AG04450 (cell line): ENCODE measurements at regions of chr6 and their contacts with region 1.

Region 1: DNA sequence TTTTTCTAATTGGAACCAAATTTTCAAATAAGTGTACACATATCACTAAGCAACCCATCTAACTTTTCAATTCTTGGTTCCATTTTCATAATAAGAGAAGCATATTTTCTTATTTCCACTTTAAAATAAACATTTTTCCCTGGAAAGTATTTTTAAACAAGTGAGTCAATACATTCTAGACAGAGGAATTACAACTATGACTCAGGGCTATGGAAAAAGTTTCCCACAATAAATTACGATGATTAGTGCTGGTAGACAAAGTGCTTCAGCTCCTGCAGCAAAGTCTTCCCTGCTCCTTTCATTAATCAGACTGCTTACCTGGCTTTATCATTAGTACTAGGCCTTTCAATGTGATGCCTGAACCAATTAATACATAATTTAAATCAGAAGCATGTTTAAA is 322.5 kb downstream of the HACE1 start:
- DNase-seq: peak; percentile 32
- H3K4me3 ChIP-seq: no peak overlapping the region
- H3K27ac ChIP-seq: no peak overlapping the region
- H3K27me3 ChIP-seq: no peaks in the 10 kb centered on the region
- CTCF ChIP-seq: no peak

Region 2: DNA sequence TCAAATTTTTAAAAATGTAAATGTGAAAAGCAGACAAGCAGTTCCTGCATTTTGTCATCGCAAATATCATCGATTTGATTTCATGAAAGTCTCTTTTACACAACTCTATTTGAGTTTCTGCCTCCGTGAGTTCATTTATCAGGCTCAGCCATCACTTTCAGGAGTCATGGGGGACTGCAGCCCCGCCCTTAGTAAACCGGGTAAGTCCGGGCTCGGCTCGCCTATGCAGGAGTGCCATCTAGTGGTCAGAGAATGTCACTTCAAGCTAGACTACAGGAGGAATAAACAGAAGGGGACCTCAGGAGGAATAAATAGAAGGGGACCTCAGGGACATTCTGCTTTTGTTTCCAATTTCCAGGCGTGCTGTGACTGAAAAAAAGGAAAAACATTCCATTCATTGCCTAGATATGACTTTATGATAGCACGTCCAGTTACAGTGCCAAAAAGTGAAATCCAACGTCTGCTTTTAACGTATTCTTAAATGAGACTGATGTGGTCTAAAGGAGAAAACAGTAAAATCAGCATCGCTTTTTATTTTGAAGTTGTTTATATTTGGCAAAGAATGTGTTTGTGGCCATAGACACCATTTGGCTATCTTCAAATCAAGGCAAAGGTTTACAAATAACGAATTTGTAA is 11.4 kb before region 1 on chr6:
- CTCF ChIA-PET with region 1: interaction called, 40 read pairs
- POLR2A ChIA-PET with region 1: interaction called, 3 read pairs
- DNase-seq: peak; percentile 32
- H3K4me3 ChIP-seq: peak overlapping the region; percentile 41
- H3K27ac ChIP-seq: no peak overlapping the region
- H3K27me3 ChIP-seq: no peaks in the 10 kb centered on the region
- CTCF ChIP-seq: peak; percentile 93